ENCODE measurements at regions of chr19 and their contacts with region 1.

Region 1: GRCh38 chr19:51473009-51473707 is 5.2 kb upstream of the CEACAM18 start:
- DNase-seq: peak; percentile 77
- ATAC-seq: peak; percentile 71 to 82

Region 2: DNA sequence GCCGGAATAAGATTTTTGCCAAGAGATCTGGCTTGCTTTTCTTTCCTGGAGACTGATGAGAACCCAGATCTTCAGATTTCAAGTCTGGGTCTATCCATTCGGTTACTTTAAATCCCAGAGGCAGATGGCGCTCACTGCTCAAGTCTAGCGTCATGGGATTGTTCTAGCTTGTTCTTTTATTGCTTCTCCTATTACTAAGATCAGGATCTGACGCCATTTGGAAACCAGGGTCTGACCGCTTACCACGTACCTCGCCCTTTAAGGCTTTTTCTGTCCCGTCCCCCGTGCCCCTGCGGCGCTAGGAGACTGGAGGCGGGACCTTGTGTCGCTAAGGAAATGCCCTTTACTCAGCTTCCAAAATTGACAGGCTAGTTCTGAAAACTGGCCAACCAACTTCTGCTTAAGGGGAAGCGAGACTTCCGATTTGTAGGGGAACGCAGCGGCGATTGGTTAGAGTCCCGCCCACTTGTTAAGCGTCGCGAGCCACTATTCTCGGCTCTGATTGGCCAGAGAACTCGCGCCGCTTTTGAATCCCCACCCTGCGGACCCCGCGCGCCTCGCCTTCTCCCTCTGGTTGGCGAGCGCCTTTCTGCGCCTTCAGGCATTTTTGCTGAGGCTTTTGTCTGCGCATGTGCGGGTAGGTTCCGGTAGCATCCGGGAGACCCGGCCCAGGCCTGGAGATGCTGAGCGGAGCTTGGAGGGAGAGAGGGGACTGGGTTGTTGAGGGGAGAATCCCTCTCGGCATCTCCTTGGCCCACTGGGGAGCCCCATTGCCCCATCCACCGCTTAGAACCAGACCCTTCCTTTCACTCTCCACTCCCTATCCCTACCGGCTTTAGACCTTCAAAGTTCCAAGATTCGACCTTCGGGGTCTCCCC is 79.0 kb before region 1 on chr19:
- intact Hi-C with region 1: no loop called
- DNase-seq: peak; percentile 95
- ATAC-seq: peak; percentile 98

Region 3: DNA sequence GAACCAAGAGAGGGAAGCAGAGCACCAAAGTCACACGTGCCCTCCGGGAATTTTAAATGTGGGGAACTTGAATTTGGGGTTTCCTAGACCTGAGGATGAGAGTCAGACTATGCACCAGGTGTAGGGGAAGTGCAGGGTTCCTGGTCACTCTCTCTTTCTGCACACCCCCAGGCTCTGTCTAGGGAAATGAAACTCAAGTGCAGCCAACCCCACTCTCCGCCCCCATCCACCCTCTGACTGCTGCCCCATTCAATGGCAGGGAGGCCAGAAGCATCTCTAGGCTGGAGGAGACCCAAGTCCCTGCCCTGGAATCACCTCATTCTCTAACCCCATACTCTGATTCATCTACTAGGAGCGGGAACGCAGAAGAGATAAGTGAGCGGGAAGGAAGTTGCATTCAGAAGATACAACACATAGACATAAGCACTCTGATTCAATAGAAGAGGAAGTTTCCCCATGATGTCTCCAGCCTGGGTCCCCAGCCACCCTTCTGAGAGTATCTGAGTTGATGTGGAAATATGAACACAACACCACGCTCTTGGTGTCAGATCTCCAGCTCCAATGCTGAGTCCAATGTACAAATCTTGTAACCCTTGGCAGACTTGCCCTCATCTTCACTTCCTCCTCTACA is 178.2 kb after region 1 on chr19:
- intact Hi-C with region 1: loop called (anchors 2 to 10 kb)
- DNase-seq: no peak
- ATAC-seq: peak in 1 of 2 donors; percentile 54

Region 4: DNA sequence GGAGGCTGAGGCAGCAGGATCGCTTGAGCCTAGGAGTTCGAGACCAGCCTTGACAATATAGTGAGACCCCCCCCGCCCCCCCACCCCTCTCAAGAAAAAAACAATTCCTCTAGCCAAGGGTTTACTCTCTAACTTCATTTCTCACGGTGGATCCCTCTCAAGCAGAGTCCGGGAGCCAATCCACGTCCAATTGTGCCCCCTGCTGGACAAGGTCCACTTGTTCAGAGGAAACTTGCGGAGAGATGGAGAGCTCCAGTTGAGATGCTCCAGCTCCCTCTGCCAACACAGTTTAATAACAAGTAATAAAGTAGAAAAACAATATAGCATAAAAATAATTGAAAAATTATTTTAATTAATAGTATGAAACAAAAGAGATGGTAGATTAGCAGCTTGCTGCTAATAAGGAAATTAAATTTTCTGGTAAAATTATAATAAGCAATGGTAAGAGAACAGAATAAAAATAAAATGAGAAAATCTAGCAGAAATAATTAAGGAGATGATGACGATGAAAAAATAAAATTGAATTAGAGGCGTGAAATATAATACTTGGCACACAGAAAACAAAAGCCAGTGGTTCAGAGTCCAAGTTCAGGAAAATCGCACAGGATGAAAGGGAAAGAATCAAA is 187.9 kb after region 1 on chr19:
- intact Hi-C with region 1: loop called (anchors 2 to 10 kb)
- DNase-seq: peak; percentile 78
- ATAC-seq: peak in 1 of 2 donors; percentile 67

Region 5: DNA sequence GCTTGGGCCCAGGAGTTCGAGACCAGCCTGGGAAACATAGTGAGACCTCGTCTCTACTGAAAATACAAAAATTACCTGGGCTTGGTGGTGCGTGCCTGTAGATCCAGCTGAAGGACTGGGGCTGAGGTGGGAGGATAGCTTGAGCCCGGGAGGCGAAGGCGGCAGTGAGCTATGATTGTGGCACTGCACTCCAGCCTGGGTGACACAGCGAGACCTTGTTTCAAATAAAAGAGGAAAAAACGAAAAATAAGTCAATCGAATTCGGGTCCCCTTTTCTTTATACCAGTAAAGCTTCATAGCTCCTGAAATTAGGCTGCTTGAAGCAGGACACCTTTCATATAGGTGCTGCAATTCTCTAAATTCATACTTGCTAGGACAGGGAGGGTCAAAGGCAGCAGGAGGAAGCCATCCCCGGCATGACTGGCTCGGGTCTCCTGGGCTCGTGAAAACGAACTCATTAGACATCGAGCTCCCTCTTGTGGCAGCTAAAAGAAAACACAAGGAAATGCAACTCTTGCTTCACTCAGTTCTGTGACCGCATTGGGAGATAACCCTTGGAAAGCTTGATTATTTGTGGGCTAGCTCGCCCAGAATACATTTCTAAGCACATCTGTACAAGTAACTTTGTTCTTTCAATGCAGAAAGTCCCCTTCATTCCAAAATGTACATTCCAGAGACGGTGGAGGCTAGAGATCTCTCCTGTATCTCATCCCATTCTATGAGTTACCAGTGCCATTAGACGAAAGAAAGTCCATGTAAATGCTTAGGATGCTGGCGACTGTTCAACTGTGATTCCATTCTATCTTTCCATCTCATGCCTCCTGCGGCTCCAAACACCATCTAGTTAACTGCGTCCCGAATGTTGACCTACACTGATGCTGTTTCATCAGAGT is 304.7 kb after region 1 on chr19:
- intact Hi-C with region 1: loop called in 1 of 2 experiments (anchors 5 kb)
- DNase-seq: peak; percentile 69
- ATAC-seq: peak; percentile 94 to 97

Measured in left cardiac atrium (tissue), 4 donors.